Posterior cingulate gyrus (tissue), 11 donors: ENCODE measurements at regions of chr20 and their contacts with region 1.

Region 1: DNA sequence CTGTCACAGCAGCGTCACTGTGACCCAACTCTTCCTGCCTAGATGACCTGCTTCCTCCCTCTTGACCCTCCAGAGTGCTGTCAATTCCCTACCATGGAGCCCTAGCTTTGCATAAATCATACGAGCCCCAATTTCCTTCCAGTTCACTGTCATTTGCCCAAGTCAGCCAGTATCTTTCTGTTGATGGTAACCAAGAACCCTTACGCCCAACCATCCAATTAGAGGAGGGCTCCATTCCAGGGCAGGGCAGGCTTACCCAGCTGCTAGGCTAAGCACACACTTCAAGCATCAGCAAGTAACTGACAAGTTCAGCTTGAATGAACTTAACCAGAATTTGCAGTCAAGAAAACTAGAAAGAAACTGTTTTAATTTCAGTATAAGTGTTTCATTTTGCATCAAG is 25.7 kb downstream of the WFDC3 start:
- DNase-seq: no peak

Region 2: DNA sequence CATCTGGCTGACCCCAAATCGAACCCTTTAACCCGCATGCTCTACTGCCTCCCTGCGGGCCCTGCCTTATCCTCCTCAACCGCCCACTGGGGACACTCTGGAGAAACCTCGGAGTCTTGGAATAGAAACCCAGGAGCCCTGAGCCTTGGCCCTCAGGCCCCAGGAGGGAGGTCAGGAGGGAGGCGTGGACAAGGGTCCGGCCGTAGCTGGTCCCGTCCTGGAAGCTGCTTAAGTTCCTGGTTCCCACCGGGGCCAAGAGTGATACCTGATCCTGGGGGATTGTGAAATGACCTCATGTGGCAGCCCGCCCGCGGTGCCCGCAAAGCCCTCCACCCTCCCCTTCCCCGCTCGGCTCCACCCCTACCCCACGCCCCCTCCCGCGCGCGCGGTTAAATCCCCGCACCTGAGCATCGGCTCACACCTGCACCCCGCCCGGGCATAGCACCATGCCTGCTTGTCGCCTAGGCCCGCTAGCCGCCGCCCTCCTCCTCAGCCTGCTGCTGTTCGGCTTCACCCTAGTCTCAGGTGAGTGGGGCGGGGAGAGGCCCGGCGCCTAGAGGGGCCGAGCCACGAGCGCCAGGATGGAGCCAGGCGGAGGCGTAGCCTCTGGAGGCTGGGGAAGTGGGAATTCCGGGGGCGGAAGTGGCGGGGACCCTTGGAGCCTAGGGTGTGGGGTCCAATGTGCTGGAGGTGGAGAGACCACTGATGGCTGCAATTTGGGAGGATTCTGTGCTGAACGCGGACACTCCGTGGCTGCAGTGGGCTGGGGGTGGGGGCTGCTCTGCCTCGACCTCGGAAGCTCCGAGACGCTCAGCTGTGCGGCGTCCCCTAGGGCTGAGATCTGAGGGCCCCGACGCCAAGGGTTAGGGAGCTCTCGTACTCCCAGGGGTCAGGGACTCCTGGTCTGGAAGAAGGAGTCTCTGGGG is 296.4 kb before region 1 on chr20 and contains the start of gene WFDC2:
- intact Hi-C with region 1: loop called (anchors 10 kb)
- DNase-seq: peak in 1 of 10 donors; percentile 83

Region 3: DNA sequence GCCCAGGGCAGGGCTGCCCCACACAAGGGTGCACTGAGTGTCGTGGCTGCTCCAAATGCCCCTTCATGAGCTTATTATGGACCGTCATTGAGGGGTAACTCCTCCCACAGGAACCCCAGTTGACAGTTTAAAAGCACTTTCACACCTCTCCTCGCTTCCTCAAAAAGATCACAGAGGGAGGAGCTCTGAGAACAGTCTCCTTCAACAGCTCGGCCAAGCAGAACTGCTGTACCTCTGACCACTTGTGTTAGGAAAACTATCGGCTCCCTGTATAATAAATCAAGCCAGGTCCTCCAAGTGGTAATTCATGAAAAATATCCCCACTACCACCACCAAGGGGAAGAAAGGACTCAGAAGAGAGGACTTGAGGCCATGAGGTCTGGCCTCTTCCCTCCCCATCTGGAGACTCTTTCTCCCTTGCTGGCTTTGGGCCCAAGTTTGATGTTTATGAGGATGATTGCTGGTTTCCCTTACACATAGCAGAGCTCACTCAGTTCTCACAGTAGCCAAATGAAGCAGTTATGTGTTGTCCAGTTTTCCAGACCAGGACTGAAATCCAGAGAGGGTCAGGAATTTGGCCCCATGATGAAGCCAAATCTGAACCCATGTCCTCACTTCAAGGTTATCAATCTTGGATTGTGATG is 76.3 kb after region 1 on chr20:
- intact Hi-C with region 1: no loop called
- DNase-seq: no peak